H1 (cell line): ENCODE measurements at regions of chr1 and their contacts with region 1.

Region 1: GRCh38 chr1:46527474-46528296 is 23.8 kb downstream of the KNCN start:
- DNase-seq: peak; percentile 47 to 96
- H3K4me3 ChIP-seq: no peak overlapping the region
- H3K27ac ChIP-seq: no peak overlapping the region
- H3K4me1 ChIP-seq: peaks cover 8 to 31% (median 18%) of the 10 kb centered on the region in 4 experiments
- H3K27me3 ChIP-seq: peaks cover 22 to 88% (median 72%) of the 10 kb centered on the region in 4 experiments
- CTCF ChIP-seq: peak in 2 of 3 experiments; percentile 97 to 99; a peak in 3 of 4 replicates
- EP300 ChIP-seq: no peak
- POLR2A ChIP-seq: no peak
- RAD21 ChIP-seq: peak; percentile 98 to 100

Region 2: DNA sequence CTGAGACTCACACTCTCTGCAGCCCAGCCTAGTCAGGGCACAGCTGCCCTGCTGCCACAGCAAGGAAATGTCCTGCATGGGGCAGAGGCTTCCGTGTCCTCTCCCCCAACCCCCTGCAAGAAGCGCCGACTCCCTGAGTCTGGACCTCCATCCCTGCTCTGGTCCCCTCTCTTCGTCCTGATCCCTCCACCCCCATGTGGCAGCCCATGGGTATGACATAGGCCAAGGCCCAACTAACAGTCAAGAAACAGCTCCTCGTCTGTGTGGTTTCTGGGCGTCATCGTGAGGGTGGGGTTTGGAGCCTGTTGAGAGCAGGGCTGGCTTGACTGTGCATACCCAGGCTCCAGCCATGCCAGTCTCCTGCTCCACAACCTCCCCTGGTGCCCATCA is 114.1 kb before region 1 on chr1:
- CTCF ChIA-PET with region 1: interaction called, 50 read pairs
- POLR2A ChIA-PET with region 1: no interaction called
- DNase-seq: peak in 1 of 2 experiments; percentile 70
- H3K4me3 ChIP-seq: no peak overlapping the region
- H3K27ac ChIP-seq: no peak overlapping the region
- H3K4me1 ChIP-seq: peaks cover 0 to 5% (median 2%) of the 10 kb centered on the region in 4 experiments; a peak in 1 of 7 replicates
- H3K27me3 ChIP-seq: no peaks in the 10 kb centered on the region
- CTCF ChIP-seq: peak in 2 of 3 experiments; percentile 59 to 70; a peak in 3 of 4 replicates
- EP300 ChIP-seq: no peak
- POLR2A ChIP-seq: no peak
- RAD21 ChIP-seq: peak; percentile 7 to 29; a peak in 3 of 4 replicates

Region 3: DNA sequence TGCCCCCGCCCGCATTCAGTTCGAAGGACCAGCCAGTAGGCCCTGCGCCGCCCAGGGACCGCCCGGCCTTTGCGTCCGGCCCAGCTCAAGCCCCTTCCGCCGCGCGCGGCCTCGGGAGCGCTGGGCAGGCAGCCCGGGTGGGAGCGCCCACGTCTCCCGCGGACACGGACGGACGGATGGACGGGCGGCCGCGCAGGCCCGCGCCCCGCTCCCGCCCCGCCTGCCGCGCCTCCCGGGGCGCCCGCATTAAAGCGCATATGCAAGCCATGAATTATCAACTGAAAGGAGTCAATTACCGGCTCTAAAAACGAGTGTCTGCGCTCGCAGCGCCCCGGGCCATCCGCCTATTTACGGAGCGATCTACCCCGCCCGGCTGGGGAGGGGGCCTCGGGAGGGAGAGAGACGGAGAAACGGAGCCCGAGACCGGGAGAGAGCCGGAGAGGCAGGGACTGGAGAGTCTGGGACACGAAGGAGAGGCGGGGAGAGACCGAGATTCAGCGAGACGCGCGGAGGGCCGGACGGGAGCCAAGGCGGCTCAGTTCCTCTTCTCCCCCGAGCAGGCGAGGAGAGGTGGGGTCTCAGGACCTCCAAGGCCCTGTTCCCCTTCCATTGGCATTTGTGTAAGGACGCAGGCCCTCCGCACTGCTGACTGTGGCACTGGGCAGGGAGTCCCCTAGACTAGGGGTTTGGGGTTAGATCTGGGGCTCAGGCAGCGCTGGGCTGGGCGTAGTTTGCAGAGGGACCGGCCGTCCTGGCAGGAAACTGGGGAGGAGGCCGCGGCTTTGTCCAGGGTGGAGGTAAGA is 79.4 kb before region 1 on chr1:
- CTCF ChIA-PET with region 1: interaction called, 497 read pairs
- POLR2A ChIA-PET with region 1: interaction called, 20 read pairs
- DNase-seq: peak; percentile 69 to 80
- H3K4me3 ChIP-seq: peak overlapping the region; percentile 41 to 61 (median 54)
- H3K27ac ChIP-seq: no peak overlapping the region
- H3K4me1 ChIP-seq: peaks cover 8 to 31% (median 23%) of the 10 kb centered on the region in 4 experiments
- H3K27me3 ChIP-seq: peaks cover 56 to 72% (median 69%) of the 10 kb centered on the region in 4 experiments
- CTCF ChIP-seq: no peak
- EP300 ChIP-seq: no peak
- POLR2A ChIP-seq: no peak
- RAD21 ChIP-seq: peak in 1 of 2 experiments; percentile 10; a peak in 2 of 4 replicates

Region 4: DNA sequence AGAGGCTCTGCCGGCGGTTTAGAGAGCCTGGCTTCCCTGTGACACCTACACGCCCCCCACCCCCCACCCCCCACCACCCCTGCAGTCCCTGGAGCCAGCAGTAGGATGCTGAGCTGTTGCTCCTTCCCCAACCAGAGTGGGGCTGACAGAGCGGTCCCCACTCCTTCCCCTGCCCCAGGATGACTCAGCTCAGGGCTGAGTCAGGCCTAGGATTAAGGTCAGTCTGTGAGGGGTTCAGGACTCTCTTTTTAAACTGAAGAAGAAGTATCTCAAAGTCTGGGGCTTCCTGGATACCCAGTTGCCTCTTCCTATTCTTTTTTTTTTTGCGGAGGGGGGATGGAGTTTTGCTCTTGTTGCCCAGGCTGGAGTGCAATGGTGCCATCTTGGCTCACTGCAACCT is 18.9 kb before region 1 on chr1:
- CTCF ChIA-PET with region 1: interaction called, 1,068 read pairs
- POLR2A ChIA-PET with region 1: no interaction called
- DNase-seq: no peak
- H3K4me3 ChIP-seq: no peak overlapping the region
- H3K27ac ChIP-seq: no peak overlapping the region
- H3K4me1 ChIP-seq: peaks cover 0 to 21% (median 4%) of the 10 kb centered on the region in 4 experiments; a peak in 4 of 7 replicates
- H3K27me3 ChIP-seq: no peaks in the 10 kb centered on the region; a peak in 3 of 7 replicates
- CTCF ChIP-seq: no peak
- EP300 ChIP-seq: no peak
- POLR2A ChIP-seq: no peak
- RAD21 ChIP-seq: no peak

Region 5: DNA sequence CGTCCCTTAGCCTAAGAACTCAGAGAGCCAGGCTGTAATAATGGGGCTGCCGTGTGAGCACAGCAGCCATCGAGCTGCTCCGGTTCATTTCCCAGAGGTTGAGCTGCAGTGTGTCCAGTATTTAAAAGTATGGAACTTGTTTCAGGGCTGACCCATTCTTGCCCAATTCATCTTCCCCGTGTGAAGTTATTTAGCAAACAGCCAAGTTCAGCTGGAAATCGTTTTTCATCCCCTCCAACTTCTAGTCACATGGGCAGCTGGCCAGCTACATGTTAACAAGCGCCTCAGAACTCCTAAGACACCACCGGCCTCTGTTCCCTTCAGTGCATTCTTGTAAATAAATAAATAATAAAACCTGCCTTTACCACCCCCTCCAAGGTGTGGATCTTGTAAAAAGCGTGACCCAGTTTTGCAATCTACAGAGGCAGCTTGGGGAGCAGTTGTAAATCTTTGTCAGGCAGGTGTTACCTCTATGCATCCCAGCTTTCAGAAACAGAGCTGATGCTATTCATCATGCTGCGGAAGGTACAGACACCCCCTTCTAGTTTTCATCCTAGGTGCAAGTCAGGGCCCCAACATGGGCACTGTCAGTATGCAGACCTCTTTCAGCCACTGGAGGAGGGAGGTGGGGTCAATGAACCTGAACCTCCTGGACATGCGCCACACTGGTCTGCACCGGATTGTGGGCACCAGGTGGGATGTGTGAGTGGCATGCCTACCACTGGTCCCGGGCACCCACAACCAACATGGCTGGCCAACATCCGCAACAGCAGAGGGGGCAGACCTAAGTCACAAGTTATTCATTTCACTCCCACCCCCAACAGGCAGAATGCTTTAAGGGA is 42.4 kb after region 1 on chr1:
- CTCF ChIA-PET with region 1: interaction called, 17 read pairs
- POLR2A ChIA-PET with region 1: no interaction called
- DNase-seq: no peak
- H3K4me3 ChIP-seq: no peak overlapping the region
- H3K27ac ChIP-seq: no peak overlapping the region
- H3K4me1 ChIP-seq: peaks cover 1 to 5% (median 2%) of the 10 kb centered on the region in 4 experiments; a peak in 5 of 7 replicates
- H3K27me3 ChIP-seq: no peaks in the 10 kb centered on the region
- CTCF ChIP-seq: no peak
- EP300 ChIP-seq: no peak
- POLR2A ChIP-seq: no peak
- RAD21 ChIP-seq: no peak

Region 6: GRCh38 chr1:46622344-46622743 is 94.7 kb after region 1 on chr1:
- CTCF ChIA-PET with region 1: interaction called, 34 read pairs
- POLR2A ChIA-PET with region 1: no interaction called
- DNase-seq: peak in 1 of 2 experiments; percentile 70
- H3K4me3 ChIP-seq: no peak overlapping the region
- H3K27ac ChIP-seq: no peak overlapping the region
- H3K4me1 ChIP-seq: no peaks in the 10 kb centered on the region; a peak in 3 of 7 replicates
- H3K27me3 ChIP-seq: peaks cover 0 to 6% (median 5%) of the 10 kb centered on the region in 4 experiments; a peak in 5 of 7 replicates
- CTCF ChIP-seq: peak; percentile 38 to 76 (median 72)
- EP300 ChIP-seq: no peak
- POLR2A ChIP-seq: no peak
- RAD21 ChIP-seq: peak; percentile 66 to 78

Region 7: GRCh38 chr1:46784666-46785065 is 257.0 kb after region 1 on chr1:
- CTCF ChIA-PET with region 1: no interaction called
- POLR2A ChIA-PET with region 1: no interaction called
- DNase-seq: no peak
- H3K4me3 ChIP-seq: no peak overlapping the region
- H3K27ac ChIP-seq: no peak overlapping the region
- H3K4me1 ChIP-seq: peaks cover 0 to under 1% (median under 1%) of the 10 kb centered on the region in 4 experiments; a peak in 2 of 7 replicates
- H3K27me3 ChIP-seq: no peaks in the 10 kb centered on the region
- CTCF ChIP-seq: no peak
- EP300 ChIP-seq: no peak
- POLR2A ChIP-seq: no peak
- RAD21 ChIP-seq: no peak